Stomach (tissue), 19 donors: ENCODE measurements at regions of chr3 and their contacts with region 1.

Region 1: GRCh38 chr3:50192689-50193141 is 1.3 kb downstream of the GNAT1 start:
- DNase-seq: peak; percentile 82 to 89
- H3K4me3 ChIP-seq: no peak overlapping the region
- H3K27ac ChIP-seq: no peak overlapping the region
- H3K4me1 ChIP-seq: peaks cover 8 to 37% (median 30%) of the 10 kb centered on the region in 4 donors
- H3K27me3 ChIP-seq: peaks cover 8 to 48% (median 20%) of the 10 kb centered on the region in 3 donors
- CTCF ChIP-seq: peak in 5 of 7 experiments; percentile 68 to 94 (median 91)
- EP300 ChIP-seq: no peak
- POLR2A ChIP-seq: no peak

Region 2: DNA sequence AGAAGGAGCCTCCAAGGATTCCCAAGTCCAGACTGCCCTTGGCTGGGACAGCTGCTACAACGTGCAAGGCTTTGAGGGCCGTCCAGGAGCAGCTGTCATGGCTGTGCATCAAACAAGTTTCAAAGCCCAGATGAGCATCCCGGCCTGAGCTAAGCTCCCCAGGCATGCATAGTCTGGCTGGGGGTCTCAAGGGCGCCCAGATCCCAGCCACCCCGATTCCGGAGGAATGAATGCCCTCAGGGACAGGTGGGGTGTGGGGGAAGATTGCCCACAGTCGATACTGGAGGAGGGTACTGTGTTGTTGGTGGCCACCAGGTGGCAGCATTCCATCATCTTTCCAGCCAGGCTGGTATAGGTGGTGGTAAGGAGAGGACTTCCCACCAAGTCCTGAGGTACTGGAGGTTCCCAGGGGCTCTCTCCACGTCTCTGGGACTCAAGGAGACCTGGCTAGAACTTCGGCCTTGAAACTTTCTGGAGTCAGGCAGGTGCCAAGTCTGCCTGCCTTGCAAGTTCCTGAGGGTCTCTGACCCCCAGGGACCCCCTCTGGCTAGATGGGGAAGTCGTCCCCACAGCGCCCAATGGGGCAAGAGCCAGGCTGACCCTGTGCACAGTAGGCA is 71.2 kb before region 1 on chr3:
- intact Hi-C with region 1: loop called (anchors 5 kb)
- DNase-seq: peak; percentile 81 to 94
- H3K4me3 ChIP-seq: no peak overlapping the region
- H3K27ac ChIP-seq: no peak overlapping the region
- H3K4me1 ChIP-seq: peaks cover 16 to 55% (median 47%) of the 10 kb centered on the region in 4 donors
- H3K27me3 ChIP-seq: no peaks in the 10 kb centered on the region
- CTCF ChIP-seq: peak in 5 of 7 experiments; percentile 67 to 95 (median 91)
- EP300 ChIP-seq: no peak
- POLR2A ChIP-seq: no peak

Region 3: GRCh38 chr3:50227390-50228183 is 34.9 kb after region 1 on chr3:
- intact Hi-C with region 1: loop called (anchors 2 kb)
- DNase-seq: peak; percentile 95 to 98
- H3K4me3 ChIP-seq: peak overlapping the region; percentile 59 to 82 (median 64)
- H3K27ac ChIP-seq: peak overlapping the region; percentile 75 to 85 (median 83)
- H3K4me1 ChIP-seq: peaks cover 13 to 30% (median 28%) of the 10 kb centered on the region in 4 donors
- H3K27me3 ChIP-seq: no peaks in the 10 kb centered on the region
- CTCF ChIP-seq: peak in 5 of 7 experiments; percentile 69 to 97 (median 91)
- EP300 ChIP-seq: no peak
- POLR2A ChIP-seq: no peak

Region 4: GRCh38 chr3:50272911-50273693 is 80.4 kb after region 1 on chr3:
- intact Hi-C with region 1: loop called (anchors 5 kb)
- DNase-seq: peak; percentile 93 to 95
- H3K4me3 ChIP-seq: peak overlapping the region; percentile 32 to 47 (median 38)
- H3K27ac ChIP-seq: peak overlapping the region; percentile 37 to 88 (median 41)
- H3K4me1 ChIP-seq: peaks cover 52 to 77% (median 69%) of the 10 kb centered on the region in 4 donors
- H3K27me3 ChIP-seq: peaks cover 0 to 40% (median 26%) of the 10 kb centered on the region in 3 donors
- CTCF ChIP-seq: peak in 6 of 7 experiments; percentile 69 to 100 (median 98)
- EP300 ChIP-seq: no peak
- POLR2A ChIP-seq: no peak

Region 5: DNA sequence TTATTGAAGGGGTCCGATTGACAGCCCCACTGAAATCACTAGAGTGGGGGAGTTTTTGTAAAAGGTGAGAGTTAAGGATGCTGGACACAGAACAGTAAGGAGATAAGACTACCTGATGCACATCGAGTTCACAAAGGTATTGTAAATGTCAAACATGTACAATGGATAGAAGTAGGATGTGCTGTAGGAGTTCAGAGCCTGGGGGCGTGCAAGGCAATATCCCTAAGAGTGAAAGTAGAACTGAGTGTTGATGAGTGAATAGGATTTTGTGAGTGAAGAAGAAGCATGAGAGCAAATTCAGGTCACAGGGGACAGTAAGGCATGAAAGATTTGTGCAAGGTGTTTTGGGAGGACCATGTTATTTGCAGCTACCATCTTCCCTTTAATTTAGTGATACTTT is 503.6 kb after region 1 on chr3:
- intact Hi-C with region 1: no loop called
- DNase-seq: no peak
- H3K4me3 ChIP-seq: no peak overlapping the region
- H3K27ac ChIP-seq: no peak overlapping the region
- H3K4me1 ChIP-seq: no peaks in the 10 kb centered on the region
- H3K27me3 ChIP-seq: peaks cover 0 to 5% (median 0%) of the 10 kb centered on the region in 3 donors
- CTCF ChIP-seq: no peak
- EP300 ChIP-seq: no peak
- POLR2A ChIP-seq: no peak